ENCODE measurements at regions of chr12 and their contacts with region 1.

Region 1: GRCh38 chr12:2291182-2291832 is 238.5 kb downstream of the CACNA1C start:
- DNase-seq: no peak
- ATAC-seq: peak; percentile 61 to 83 (median 70)
- H3K4me3 ChIP-seq: no peak overlapping the region
- H3K27ac ChIP-seq: no peak overlapping the region
- H3K4me1 ChIP-seq: no peaks in the 10 kb centered on the region
- H3K27me3 ChIP-seq: no peaks in the 10 kb centered on the region
- CTCF ChIP-seq: peak; percentile 71 to 84 (median 78)
- POLR2A ChIP-seq: no peak

Region 2: GRCh38 chr12:2057041-2057794 is 234.1 kb before region 1 on chr12:
- intact Hi-C with region 1: loop called in 1 of 2 experiments (anchors 10 kb)
- DNase-seq: peak in 1 of 3 donors; percentile 66
- ATAC-seq: peak; percentile 23 to 59 (median 42)
- H3K4me3 ChIP-seq: no peak overlapping the region
- H3K27ac ChIP-seq: no peak overlapping the region
- H3K4me1 ChIP-seq: peaks cover 0 to 8% (median 0%) of the 10 kb centered on the region in 4 donors
- H3K27me3 ChIP-seq: peaks cover 0 to under 1% of the 10 kb centered on the region in 2 donors
- CTCF ChIP-seq: peak; percentile 55 to 68 (median 62)
- POLR2A ChIP-seq: no peak

Region 3: DNA sequence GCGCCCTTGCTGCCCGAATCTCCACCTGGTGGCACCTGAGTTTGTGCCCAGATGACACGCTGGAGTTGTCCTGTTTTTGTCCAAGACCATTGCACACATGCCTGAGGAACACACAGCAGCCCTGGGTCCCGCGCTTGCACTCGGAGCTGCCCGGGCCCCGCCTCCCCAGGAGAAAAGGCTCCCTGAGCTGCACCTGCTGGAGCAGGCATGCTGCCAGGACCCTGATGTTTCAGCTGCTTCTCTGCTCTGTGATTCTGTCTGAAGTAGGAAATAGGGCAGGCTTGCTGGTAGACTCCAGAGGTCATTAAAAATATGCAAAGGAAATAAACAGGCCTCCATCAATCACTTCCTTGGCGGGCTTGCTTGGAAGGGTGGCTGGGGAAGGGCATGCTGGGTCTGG is 33.1 kb after region 1 on chr12:
- intact Hi-C with region 1: no loop called
- DNase-seq: no peak
- ATAC-seq: no peak
- H3K4me3 ChIP-seq: no peak overlapping the region
- H3K27ac ChIP-seq: no peak overlapping the region
- H3K4me1 ChIP-seq: no peaks in the 10 kb centered on the region
- H3K27me3 ChIP-seq: no peaks in the 10 kb centered on the region
- CTCF ChIP-seq: no peak
- POLR2A ChIP-seq: no peak

Region 4: DNA sequence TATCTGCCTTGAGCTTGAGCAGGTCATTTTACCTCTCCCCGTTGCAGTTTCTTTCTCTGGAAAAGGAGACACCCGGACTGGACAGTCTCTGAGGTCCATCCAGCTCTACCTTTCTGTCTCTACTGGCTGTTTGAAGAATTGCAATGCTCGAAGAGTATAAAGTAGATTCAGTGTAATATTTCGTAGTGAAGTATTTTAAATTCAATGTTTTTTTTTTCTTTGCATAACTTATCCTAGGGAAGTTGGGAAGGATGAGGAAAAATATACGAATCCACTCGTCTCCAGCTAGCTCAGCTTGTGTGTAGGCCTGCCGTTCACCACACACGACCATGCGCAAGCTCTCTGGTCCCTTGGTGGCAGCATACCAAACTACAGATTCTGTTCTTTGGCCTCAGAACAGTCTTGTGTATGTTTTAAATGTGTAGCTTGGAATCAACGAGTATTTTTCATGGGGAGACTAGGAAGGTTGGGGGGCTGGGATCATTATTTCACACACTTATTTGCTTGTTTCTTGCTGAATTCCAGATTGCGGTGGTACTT is 69.4 kb after region 1 on chr12:
- intact Hi-C with region 1: no loop called
- DNase-seq: no peak
- ATAC-seq: no peak
- H3K4me3 ChIP-seq: no peak overlapping the region
- H3K27ac ChIP-seq: no peak overlapping the region
- H3K4me1 ChIP-seq: no peaks in the 10 kb centered on the region
- H3K27me3 ChIP-seq: no peaks in the 10 kb centered on the region
- CTCF ChIP-seq: peak in 1 of 4 donors; percentile 7
- POLR2A ChIP-seq: no peak

Measured in right lobe of liver (tissue), 6 donors.